Dorsolateral prefrontal cortex (tissue), 120 donors: ENCODE measurements at regions of chr19 and their contacts with region 1.

Region 1: GRCh38 chr19:3185482-3186376 is at the start of gene NCLN:
- DNase-seq: peak; percentile 94 to 96 (median 95)
- H3K4me3 ChIP-seq: peak within 1 kb of the TSS; percentile 74 to 100 (median 97)
- H3K27ac ChIP-seq: peak within 1 kb of the TSS; percentile 72 to 98 (median 93)
- H3K27me3 ChIP-seq: no peaks in the 10 kb centered on the region
- CTCF ChIP-seq: peak in 13 of 56 donors; percentile 1 to 47 (median 12)
- total RNA-seq, gene NCLN: 27.6 to 59.4 (median 41.0) TPM

Region 2: DNA sequence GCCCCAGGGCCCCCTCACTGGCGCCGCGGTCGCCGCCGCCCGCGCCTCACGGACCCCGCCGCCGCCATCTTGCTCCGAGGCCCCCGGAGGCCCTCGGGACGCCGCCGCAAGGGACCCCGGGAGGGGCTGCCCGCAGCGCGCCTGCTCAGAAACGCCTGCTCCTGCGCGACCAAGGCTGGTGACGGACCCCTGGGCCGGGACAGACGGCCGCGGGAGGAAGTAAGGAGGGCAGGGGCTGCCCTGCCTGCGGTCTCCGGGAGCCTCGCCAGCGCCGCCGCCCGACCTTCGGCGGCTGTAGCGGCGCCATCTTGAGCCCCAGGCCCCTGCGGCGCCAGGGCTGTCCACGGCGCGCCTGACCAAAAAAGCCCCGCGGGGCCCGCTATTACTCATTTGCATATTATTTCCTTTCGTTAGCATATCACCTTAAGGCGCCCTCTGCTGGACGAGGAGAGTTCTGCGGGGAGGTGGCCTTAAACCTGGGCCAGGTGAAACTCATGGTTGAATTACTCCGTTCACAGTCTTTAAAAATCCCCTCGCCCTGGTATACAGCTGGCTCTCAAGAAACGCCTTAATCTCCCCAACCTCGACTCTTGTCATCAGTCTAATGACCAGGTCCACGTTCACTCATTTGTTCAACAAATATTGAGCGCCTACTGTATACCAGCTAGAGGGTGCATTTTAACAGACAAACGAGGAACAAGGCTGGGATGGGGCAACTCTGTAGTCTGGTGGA is 1337.2 kb before region 1 on chr19 and contains the start of gene REXO1:
- intact Hi-C with region 1: loop called in 1 of 2 experiments (anchors 10 kb)
- DNase-seq: peak; percentile 90 to 95 (median 93)
- H3K4me3 ChIP-seq: peak within 1 kb of the TSS; percentile 74 to 100 (median 95)
- H3K27ac ChIP-seq: peak within 1 kb of the TSS; percentile 95 to 100 (median 100)
- H3K27me3 ChIP-seq: no peaks in the 10 kb centered on the region
- CTCF ChIP-seq: peak; percentile 86 to 99 (median 96)
- total RNA-seq, gene REXO1: 33.1 to 84.1 (median 54.4) TPM

Region 3: GRCh38 chr19:3304871-3305423 is 119.2 kb after region 1 on chr19:
- intact Hi-C with region 1: no loop called
- DNase-seq: peak in 9 of 10 donors; percentile 60 to 80 (median 76)
- H3K4me3 ChIP-seq: peak overlapping the region in 1 of 59 donors; percentile 4
- H3K27ac ChIP-seq: no peak overlapping the region
- H3K27me3 ChIP-seq: peaks cover 0 to 51% (median 12%) of the 10 kb centered on the region in 45 donors
- CTCF ChIP-seq: peak; percentile 73 to 95 (median 87)